Pancreas (tissue), 10 donors: ENCODE measurements at regions of chr1 and their contacts with region 1.

Region 1: DNA sequence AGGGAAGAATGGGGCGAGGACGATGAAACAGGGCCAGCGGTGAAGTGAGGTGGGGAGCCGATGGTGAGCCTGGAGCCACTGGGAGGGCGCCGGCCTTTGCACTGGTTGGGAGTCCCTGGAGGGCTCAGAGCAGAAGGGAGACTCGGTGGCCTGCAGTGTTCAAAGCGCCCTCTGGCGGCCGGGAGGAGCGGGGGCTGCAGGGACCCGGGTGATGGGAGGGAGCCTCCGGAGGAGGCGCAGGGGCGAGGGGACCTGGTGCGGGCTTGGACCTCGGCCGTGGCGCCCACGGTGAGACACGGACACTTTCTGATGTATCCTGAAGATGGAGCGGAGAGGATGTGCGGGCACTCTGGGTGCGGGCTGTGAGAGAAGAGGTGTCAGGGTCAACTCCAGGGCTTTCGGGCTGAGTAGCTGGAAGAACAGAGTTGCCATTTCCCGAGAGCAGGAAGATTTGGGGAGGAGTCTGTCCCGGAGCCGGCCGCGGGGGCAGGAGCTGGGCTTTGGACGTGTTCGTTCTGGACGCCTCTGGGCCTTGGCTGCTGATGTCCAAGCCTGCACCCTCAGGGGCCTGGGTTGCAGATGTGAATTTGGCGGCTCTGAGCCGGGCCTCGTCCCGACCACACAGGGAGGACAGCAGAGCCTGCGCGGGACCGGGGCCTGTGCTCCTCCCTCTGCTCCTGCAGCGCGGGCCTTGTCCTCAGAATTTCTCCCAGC is 29.7 kb downstream of the HEYL start:
- DNase-seq: peak in 5 of 6 donors; percentile 31 to 79 (median 67)
- ATAC-seq: peak in 3 of 4 donors; percentile 26 to 66 (median 63)
- H3K4me3 ChIP-seq: no peak overlapping the region
- H3K27ac ChIP-seq: no peak overlapping the region
- H3K4me1 ChIP-seq: no peaks in the 10 kb centered on the region
- H3K27me3 ChIP-seq: no peaks in the 10 kb centered on the region
- CTCF ChIP-seq: peak; percentile 16 to 64 (median 27)

Region 2: DNA sequence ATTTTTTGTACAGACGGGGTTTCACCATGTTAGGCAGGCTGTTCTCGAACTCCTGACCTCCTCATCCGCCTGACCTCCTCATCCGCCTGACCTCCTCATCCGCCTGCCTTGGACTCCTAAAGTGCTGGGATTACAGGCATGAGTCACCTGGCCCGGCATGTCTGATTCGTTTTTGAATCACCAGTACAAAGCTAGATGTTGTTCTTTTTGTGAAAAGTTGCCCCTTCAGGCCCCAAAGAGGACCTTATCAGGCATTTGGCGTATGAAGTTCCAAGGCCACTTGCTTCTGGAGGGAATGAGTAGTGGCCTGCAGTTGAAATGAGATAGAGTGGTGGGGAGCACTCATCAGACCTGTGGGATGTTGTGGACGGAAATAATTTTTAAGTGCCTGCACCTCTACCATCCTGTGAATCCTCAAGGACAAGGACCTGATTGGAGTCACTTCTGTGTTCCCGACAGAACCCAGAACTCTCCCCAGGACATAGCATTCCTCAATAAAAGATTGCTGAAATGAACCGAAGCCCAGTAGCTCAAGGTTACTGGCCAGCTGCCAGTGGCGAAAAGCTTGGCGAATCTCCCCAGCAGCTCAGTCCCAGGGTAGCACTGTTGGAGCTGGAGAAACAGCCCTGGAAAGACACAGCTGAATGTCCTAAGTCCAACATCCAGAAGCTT is 533.5 kb before region 1 on chr1:
- intact Hi-C with region 1: no loop called
- DNase-seq: peak; percentile 68 to 90 (median 83)
- ATAC-seq: peak; percentile 82 to 94 (median 89)
- H3K4me3 ChIP-seq: no peak overlapping the region
- H3K27ac ChIP-seq: peak overlapping the region in 2 of 4 donors; percentile 0 to 39
- H3K4me1 ChIP-seq: peaks cover 0 to 13% (median 8%) of the 10 kb centered on the region in 3 donors
- H3K27me3 ChIP-seq: no peaks in the 10 kb centered on the region
- CTCF ChIP-seq: no peak

Region 3: GRCh38 chr1:39653546-39654031 is 43.8 kb after region 1 on chr1:
- intact Hi-C with region 1: loop called in 1 of 3 experiments (anchors 5 kb)
- DNase-seq: peak; percentile 65 to 85 (median 79)
- ATAC-seq: peak; percentile 73 to 88 (median 86)
- H3K4me3 ChIP-seq: no peak overlapping the region
- H3K27ac ChIP-seq: no peak overlapping the region
- H3K4me1 ChIP-seq: peaks cover 0 to 7% (median 4%) of the 10 kb centered on the region in 3 donors
- H3K27me3 ChIP-seq: no peaks in the 10 kb centered on the region
- CTCF ChIP-seq: peak; percentile 79 to 91 (median 85)

Region 4: GRCh38 chr1:39663559-39663958 is 53.8 kb after region 1 on chr1:
- intact Hi-C with region 1: loop called in 1 of 3 experiments (anchors 5 kb)
- DNase-seq: no peak
- ATAC-seq: no peak
- H3K4me3 ChIP-seq: no peak overlapping the region
- H3K27ac ChIP-seq: no peak overlapping the region
- H3K4me1 ChIP-seq: no peaks in the 10 kb centered on the region
- H3K27me3 ChIP-seq: no peaks in the 10 kb centered on the region
- CTCF ChIP-seq: no peak

Region 5: DNA sequence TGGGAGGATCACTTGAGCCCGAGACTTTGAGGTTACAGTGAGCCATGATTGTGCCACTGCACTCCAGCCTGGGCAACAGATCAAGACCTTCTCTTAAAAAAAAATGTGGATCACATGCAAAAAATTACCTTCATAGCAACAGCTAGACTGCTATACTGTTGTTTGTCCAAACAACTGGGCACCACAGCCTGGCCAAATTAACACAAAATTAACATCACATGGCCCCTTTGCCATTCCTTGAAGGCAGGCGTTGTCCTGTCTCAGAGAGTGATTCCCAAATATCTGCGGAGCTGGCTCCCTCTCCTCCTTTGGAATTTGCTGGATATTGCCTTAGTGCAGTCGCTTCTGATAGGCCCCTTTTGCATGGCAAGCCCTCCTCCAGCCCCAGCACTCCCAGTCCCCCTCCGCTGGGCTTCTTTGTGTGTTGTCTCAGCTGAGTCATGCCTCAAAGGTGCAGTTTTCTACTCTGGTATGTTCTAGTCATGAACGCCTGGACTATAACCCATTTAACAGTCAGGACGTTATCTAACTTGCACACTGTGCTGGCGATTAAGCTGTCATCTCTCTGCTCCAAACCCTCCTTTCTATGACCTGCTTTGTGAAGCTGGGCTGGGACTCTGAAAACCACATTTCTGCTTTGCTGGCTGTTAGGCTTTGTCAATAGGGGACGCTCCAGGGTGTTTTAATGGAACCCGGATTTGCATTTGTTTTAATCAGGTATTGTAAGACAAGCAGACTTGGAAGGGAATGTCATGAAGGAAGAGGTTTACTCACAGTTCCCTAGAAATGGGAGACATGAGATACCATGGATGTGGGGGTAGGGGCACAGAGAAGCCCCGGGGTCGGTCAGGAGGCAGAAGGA is 101.6 kb after region 1 on chr1:
- intact Hi-C with region 1: loop called in 1 of 3 experiments (anchors 10 kb)
- DNase-seq: no peak
- ATAC-seq: no peak
- H3K4me3 ChIP-seq: no peak overlapping the region
- H3K27ac ChIP-seq: no peak overlapping the region
- H3K4me1 ChIP-seq: no peaks in the 10 kb centered on the region
- H3K27me3 ChIP-seq: no peaks in the 10 kb centered on the region
- CTCF ChIP-seq: no peak

Region 6: DNA sequence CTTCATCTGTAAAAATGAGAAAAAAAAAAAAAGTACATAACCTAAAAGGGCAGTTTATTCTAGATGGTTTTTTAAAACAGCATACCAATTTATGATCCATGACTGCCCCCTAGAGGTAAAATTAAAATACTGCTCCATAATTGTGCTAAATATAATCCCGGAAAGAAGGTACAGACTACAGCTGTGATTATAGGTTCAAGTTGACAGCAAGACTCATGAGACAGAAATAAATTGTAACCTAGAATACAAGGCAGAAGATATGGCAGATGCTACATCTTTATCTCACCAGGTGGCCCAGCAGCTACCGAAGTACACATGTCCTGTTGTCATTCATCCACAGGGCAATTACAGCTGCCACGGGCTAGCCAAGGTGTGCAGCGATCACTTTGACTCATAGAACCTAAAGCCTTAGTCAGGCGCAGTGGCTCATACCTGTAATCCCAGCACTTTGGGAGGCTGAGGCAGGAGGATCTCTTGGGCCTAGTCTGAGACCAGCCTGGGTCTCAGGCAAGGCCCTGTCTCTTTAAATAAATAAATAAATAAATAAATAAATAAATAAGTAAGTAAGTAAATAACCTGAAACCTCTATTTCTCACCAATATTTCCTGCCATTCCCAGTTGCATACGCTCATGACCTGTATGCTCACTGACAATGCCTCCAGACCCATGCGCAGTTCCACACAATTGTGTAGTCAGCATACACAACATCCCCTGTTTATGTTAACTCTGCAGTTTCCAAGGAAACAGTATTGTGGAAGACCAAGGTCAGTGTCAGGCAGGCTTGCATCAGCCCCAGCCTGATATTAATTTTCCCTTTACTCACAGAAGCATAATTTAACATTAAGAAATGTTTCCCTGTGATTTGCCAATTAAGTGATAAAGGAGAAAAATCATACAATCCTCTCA is 110.6 kb after region 1 on chr1:
- intact Hi-C with region 1: loop called in 2 of 3 experiments (anchors 5 to 10 kb)
- DNase-seq: peak in 1 of 6 donors; percentile 52
- ATAC-seq: peak; percentile 91 to 99 (median 94)
- H3K4me3 ChIP-seq: no peak overlapping the region
- H3K27ac ChIP-seq: no peak overlapping the region
- H3K4me1 ChIP-seq: peaks cover 0 to 4% (median 0%) of the 10 kb centered on the region in 3 donors
- H3K27me3 ChIP-seq: no peaks in the 10 kb centered on the region
- CTCF ChIP-seq: peak; percentile 35 to 69 (median 65)